Posterior vena cava (tissue), 2 donors: ENCODE measurements at regions of chr20 and their contacts with region 1.

Region 1: DNA sequence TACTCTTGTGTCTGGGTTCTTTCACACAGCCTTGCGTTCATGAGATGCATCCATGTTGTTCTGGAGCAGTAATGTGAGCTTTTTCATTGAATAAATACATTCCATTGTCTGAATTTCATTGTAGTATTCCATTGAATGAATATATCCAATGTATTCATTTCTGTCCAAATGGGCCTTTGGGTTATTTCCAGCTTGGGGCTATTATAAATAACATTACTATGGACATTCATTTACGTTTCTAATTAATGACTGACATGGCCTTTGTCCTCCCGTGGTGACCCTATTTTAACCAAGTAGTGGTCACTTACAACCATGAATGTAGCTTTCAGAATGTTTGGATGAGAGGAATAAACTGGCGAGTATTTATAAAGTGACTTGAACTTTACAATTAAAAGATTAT is 30.1 kb upstream of the NAA20 start:
- DNase-seq: no peak

Region 2: DNA sequence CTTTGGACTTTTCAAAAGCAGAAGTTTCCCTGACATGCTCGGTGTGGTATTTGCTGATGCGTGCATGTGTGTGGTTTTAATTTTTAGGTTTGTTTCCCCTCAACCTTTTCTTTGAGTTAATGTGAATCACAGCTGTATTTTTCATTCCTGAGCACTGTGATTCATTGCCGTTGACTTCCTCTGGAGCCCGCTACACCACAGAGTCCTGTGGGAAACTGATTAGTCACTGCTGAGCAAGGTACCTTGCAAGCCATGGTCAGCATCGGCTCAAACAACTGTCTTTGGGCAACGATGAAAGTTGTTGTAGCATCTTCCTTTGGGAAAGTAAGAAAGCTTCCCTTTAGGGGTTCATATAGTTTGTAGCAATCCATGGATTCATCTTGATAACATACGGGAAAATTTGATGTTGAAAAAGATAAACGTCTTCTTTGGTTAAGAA is 171.5 kb before region 1 on chr20:
- intact Hi-C with region 1: no loop called
- DNase-seq: no peak

Region 3: GRCh38 chr20:19889011-19889953 is 97.8 kb before region 1 on chr20:
- intact Hi-C with region 1: loop called in 1 of 2 experiments (anchors 1 kb)
- DNase-seq: no peak